SK-N-SH (cell line): ENCODE measurements at regions of chr2 and their contacts with region 1.

Region 1: DNA sequence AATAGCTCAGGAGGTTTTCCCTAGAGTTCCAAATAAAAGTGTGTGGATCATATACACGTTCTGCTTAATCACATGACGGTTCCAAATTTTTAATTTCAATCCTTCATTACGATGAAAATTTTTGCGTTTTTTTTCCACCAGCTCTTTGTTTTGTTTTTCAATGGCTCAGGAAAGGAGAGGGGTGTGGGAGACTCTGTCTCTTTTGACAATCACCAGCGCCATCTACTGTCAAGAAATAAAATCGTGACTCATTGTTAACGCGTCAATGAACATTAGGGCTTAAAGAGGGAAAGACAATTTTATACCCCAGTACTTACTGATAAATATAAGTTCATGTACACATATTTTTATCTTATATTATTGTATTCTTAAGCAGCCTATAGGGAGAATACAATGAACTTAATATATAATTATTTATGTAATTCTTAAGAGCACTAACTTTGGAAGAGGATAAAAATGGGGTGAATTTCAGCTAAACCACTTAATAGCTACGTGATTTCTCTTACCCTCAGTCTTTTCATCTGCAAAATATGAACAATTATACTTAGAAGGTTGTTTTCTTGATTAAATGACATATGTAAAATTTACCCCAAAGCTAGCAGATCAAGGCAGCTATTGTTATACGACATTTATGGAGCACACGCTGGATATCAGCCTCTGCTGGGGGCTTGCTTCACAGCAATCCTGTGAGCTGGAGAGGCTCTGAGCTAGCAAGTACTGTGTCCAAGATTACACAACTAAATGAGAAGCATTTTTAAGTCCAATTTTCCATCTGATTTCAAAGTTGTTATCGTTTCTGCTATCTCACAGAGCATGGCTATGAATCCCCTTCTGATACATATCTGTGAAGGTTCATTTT is 47.4 kb upstream of the RMDN2 start:
- DNase-seq: peak; percentile 75
- H3K4me3 ChIP-seq: peak overlapping the region in 1 of 2 experiments; percentile 7; a peak in 1 of 4 replicates
- H3K27ac ChIP-seq: peak overlapping the region in 1 of 2 experiments; percentile 77; a peak in 2 of 4 replicates
- H3K4me1 ChIP-seq: peaks cover 0 to 23% of the 10 kb centered on the region in 2 experiments; a peak in 2 of 4 replicates
- H3K27me3 ChIP-seq: no peaks in the 10 kb centered on the region
- CTCF ChIP-seq: peak; percentile 91
- EP300 ChIP-seq: no peak; a peak in 1 of 4 replicates
- RAD21 ChIP-seq: peak; percentile 99

Region 2: GRCh38 chr2:37287966-37288365 is 589.7 kb before region 1 on chr2:
- CTCF ChIA-PET with region 1: interaction called, 16 read pairs
- POLR2A ChIA-PET with region 1: no interaction called
- DNase-seq: peak; percentile 46
- H3K4me3 ChIP-seq: no peak overlapping the region
- H3K27ac ChIP-seq: peak overlapping the region in 1 of 2 experiments; percentile 51; a peak in 1 of 4 replicates
- H3K4me1 ChIP-seq: peaks cover 8 to 11% of the 10 kb centered on the region in 2 experiments
- H3K27me3 ChIP-seq: no peaks in the 10 kb centered on the region
- CTCF ChIP-seq: peak; percentile 43
- EP300 ChIP-seq: no peak
- RAD21 ChIP-seq: peak; percentile 86

Region 3: DNA sequence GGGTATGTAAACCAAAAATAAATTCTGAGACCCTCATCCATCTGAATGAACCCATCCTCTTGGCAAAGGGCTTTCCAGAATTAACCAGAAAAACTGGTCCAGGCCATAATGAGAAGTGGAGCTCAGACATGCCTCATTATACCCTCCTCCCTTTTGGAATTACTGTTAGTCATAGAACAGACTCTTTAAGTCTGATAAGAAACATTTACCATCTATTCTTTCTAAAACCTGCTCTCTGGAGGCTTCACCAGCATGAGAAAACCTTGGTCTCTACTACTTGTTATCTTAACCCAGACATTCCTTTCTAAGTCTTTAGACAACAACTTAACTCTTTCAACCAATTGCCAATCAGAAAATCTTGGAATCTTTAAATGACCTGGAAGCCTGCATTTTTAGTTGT is 450.4 kb before region 1 on chr2:
- CTCF ChIA-PET with region 1: interaction called, 18 read pairs
- POLR2A ChIA-PET with region 1: no interaction called
- DNase-seq: no peak
- H3K4me3 ChIP-seq: no peak overlapping the region
- H3K27ac ChIP-seq: no peak overlapping the region
- H3K4me1 ChIP-seq: no peaks in the 10 kb centered on the region
- H3K27me3 ChIP-seq: no peaks in the 10 kb centered on the region
- CTCF ChIP-seq: no peak
- EP300 ChIP-seq: no peak
- RAD21 ChIP-seq: no peak

Region 4: GRCh38 chr2:37641582-37642171 is 236.0 kb before region 1 on chr2:
- CTCF ChIA-PET with region 1: interaction called, 19 read pairs
- POLR2A ChIA-PET with region 1: interaction called, 3 read pairs
- DNase-seq: peak; percentile 79
- H3K4me3 ChIP-seq: no peak overlapping the region
- H3K27ac ChIP-seq: peak overlapping the region; percentile 93 to 95
- H3K4me1 ChIP-seq: peaks cover 56 to 76% of the 10 kb centered on the region in 2 experiments
- H3K27me3 ChIP-seq: no peaks in the 10 kb centered on the region
- CTCF ChIP-seq: no peak
- EP300 ChIP-seq: peak; percentile 98
- RAD21 ChIP-seq: peak; percentile 29; the same call in 1 of the 2 replicates

Region 5: DNA sequence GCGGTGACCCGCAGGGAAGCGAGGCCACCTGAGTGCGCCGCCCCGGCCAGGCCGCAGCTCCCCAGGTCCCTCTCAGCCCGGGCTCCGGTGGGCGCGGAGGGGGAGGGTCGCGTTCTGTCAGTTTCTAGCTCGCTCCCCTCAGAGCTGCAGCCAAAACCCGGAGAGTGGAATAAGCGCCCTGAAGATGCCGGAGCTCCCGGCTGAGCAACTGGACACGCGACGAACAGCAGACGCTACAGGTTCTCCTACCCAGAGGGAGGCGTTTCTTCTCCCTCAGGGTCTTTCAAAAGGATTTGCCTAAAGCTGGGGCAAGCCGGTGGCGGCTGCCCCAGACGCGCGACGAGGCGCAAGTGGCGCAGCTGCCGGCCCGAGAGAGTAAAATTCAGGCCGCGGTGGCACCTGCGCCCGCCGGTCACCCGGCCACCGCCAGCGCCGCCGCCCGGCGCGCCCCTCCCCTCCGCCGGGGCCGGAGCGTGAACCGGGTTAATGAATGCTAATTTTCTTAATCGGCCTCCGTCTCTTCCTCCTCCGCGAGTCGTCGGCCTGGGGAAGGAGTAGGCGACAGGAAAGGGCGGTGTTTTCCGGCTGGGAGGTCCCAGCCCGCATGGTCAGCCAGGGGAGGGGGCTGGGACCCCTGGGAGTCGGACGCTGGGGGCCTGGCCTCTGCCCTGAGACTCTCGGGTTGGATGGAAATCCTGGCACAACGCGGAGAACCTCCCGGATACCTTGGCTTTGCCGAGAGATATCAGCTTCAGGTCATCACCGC is 205.4 kb before region 1 on chr2:
- CTCF ChIA-PET with region 1: interaction called, 43 read pairs
- POLR2A ChIA-PET with region 1: interaction called, 13 read pairs
- DNase-seq: peak; percentile 98
- H3K4me3 ChIP-seq: peak overlapping the region; percentile 80 to 100
- H3K27ac ChIP-seq: peak overlapping the region; percentile 86 to 99
- H3K4me1 ChIP-seq: peaks cover 21 to 26% of the 10 kb centered on the region in 2 experiments
- H3K27me3 ChIP-seq: no peaks in the 10 kb centered on the region
- CTCF ChIP-seq: peak; percentile 10; the same call in 1 of the 2 replicates
- EP300 ChIP-seq: peak in 1 of 2 experiments; percentile 58; a peak in 2 of 4 replicates
- RAD21 ChIP-seq: peak; percentile 42

Region 6: GRCh38 chr2:37851828-37852584 is 25.7 kb before region 1 on chr2:
- CTCF ChIA-PET with region 1: interaction called, 138 read pairs
- POLR2A ChIA-PET with region 1: interaction called, 13 read pairs
- DNase-seq: no peak
- H3K4me3 ChIP-seq: no peak overlapping the region
- H3K27ac ChIP-seq: peak overlapping the region in 1 of 2 experiments; percentile 80; a peak in 3 of 4 replicates
- H3K4me1 ChIP-seq: peaks cover 14 to 47% of the 10 kb centered on the region in 2 experiments; a peak in 3 of 4 replicates
- H3K27me3 ChIP-seq: no peaks in the 10 kb centered on the region
- CTCF ChIP-seq: no peak
- EP300 ChIP-seq: no peak
- RAD21 ChIP-seq: no peak

Region 7: DNA sequence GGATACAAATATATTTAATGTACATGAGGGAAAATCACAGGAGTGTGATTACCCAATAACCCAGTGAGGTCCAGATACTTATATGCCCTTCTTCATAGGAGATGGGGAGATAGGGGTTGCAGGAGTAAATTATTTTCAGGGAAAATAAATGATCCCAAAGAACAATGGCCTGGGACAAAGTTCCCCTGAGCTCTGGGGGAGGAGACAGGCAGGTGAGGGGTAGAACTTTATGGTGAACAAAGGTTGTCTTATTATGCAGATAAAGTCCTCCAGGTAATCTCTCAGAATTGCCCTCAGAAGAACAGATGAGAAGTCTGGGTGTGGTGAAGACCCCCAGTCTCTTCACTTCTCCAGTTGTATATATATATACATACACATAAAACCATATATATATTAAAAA is 25.3 kb after region 1 on chr2:
- CTCF ChIA-PET with region 1: interaction called, 13 read pairs
- POLR2A ChIA-PET with region 1: no interaction called
- DNase-seq: no peak
- H3K4me3 ChIP-seq: no peak overlapping the region
- H3K27ac ChIP-seq: no peak overlapping the region
- H3K4me1 ChIP-seq: no peaks in the 10 kb centered on the region; a peak in 1 of 4 replicates
- H3K27me3 ChIP-seq: no peaks in the 10 kb centered on the region
- CTCF ChIP-seq: no peak
- EP300 ChIP-seq: no peak
- RAD21 ChIP-seq: no peak

Region 8: DNA sequence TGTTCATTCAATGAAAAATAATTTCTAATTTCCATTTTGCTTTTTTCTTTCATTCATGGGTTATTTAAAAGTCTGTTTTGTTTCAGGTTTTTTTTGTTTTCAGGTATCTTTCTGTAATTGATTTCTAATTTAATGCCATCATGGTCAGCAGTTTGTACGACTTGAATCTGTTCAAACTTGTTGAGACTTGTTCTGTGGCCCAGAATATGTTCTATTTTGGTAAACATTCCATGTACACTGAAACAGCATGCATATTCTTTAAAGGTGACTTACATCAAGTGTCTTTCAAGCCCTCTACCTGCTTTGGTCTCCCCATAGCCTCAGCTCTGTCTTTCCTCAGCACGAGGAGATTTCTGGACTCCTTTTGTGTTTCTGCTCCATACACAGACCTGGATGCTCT is 149.2 kb after region 1 on chr2:
- CTCF ChIA-PET with region 1: no interaction called
- POLR2A ChIA-PET with region 1: no interaction called
- DNase-seq: no peak
- H3K4me3 ChIP-seq: no peak overlapping the region
- H3K27ac ChIP-seq: peak overlapping the region in 1 of 2 experiments; percentile 50; a peak in 2 of 4 replicates
- H3K4me1 ChIP-seq: peaks cover 0 to 3% of the 10 kb centered on the region in 2 experiments; a peak in 2 of 4 replicates
- H3K27me3 ChIP-seq: no peaks in the 10 kb centered on the region
- CTCF ChIP-seq: no peak
- EP300 ChIP-seq: no peak
- RAD21 ChIP-seq: no peak